CD4-positive, alpha-beta memory T cell (primary cell): ENCODE measurements at regions of chr19 and their contacts with region 1.

Region 1: DNA sequence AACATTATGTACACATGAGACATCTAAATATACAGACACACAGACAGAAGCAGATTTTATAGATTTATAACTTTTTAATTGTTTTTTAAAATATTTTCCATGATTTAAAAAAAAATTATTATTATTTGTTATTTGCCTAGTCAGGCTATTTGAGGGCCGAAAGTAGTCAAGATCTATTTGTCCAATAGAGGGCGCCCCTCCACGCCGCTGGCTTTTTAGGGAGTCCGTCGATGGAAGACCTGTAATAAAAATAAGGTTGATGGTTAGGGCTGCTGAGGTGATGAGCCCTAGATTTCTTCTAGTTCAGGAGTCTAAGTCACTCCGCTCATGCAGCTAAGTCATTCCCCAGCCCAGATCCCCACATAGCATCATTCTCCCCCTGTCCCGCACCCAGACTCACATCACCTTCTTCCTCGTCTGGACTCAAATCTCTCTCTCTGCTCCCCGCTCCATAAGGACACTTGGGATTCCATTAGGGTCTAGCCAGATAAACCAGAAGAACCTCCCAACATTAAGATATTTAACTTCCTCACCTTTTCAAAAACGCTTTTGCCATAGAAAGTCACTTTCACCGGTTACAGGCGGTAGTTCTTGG is 33.9 kb upstream of the CEACAM21 start:
- DNase-seq: peak; percentile 69 to 80 (median 76)
- H3K4me3 ChIP-seq: no peak overlapping the region
- H3K4me3 Mint-ChIP-seq: peak overlapping the region in 7 of 8 donors; percentile 55 to 86 (median 66)
- H3K27ac ChIP-seq: no peak overlapping the region
- H3K27ac Mint-ChIP-seq: peak overlapping the region; percentile 65 to 92 (median 86)
- H3K4me1 ChIP-seq: peaks cover 51% of the 10 kb centered on the region
- H3K4me1 Mint-ChIP-seq: peaks cover 42 to 48% (median 45%) of the 10 kb centered on the region in 4 donors
- H3K27me3 ChIP-seq: no peaks in the 10 kb centered on the region
- H3K27me3 Mint-ChIP-seq: no peaks in the 10 kb centered on the region

Region 2: GRCh38 chr19:41521931-41522555 is 20.0 kb before region 1 on chr19:
- CTCF ChIA-PET with region 1: interaction called, 4 read pairs
- POLR2A ChIA-PET with region 1: interaction called, 4 read pairs
- intact Hi-C with region 1: loop called (anchors 2 kb)
- DNase-seq: peak; percentile 40 to 58 (median 43)
- H3K4me3 ChIP-seq: peak overlapping the region in 1 of 2 donors; percentile 50
- H3K4me3 Mint-ChIP-seq: peak overlapping the region; percentile 82 to 96 (median 90)
- H3K27ac ChIP-seq: peak overlapping the region; percentile 46
- H3K27ac Mint-ChIP-seq: peak overlapping the region; percentile 78 to 95 (median 94)
- H3K4me1 ChIP-seq: peaks cover 13% of the 10 kb centered on the region
- H3K4me1 Mint-ChIP-seq: peaks cover 15 to 28% (median 18%) of the 10 kb centered on the region in 4 donors
- H3K27me3 ChIP-seq: peaks cover 3% of the 10 kb centered on the region
- H3K27me3 Mint-ChIP-seq: peaks cover 5 to 28% of the 10 kb centered on the region in 2 donors

Region 3: DNA sequence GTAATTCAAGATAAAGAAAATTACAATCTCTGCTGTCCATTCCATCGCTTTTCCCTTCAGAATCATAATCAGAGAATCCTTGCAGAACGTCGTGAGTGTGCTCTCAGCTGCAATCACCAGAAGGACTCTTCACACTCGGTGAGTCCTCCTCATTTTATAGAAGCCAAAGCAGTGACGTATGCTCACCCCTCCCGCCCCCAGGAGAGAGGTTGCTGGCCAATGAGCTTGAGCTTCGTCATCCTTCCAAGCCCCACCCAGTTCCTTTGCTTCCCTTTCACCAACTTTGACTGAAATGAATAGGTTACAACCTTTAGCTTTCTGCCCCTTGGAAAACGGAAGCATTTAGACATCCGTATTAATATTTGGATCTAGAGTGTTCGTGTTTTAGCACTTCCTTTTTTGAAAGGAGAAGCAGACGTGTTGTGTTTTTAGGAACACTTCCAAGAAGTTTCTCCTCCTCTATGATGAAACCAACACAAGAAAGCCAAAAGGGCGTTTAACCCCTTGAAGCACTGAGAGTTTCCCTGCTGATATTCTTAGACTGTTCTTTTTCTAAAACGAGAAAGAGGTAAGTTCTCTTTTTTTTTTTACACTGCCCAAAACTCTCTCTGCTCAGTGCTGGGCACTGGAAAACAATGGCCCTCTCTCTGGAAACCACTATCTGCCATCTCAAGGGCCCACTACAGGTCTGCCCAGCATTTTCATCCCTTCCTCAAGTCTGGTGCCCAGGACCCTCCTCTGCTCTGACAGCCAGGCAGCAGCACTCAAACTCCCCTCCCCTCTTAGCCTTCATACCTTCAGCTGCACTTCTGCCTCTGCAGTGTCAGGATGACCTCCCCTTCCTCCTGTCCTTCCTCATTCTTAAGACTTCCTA is 10.4 kb before region 1 on chr19:
- CTCF ChIA-PET with region 1: interaction called, 15 read pairs
- POLR2A ChIA-PET with region 1: interaction called, 78 read pairs
- intact Hi-C with region 1: no loop called
- DNase-seq: peak; percentile 80 to 93 (median 88)
- H3K4me3 ChIP-seq: peak overlapping the region; percentile 30 to 37
- H3K4me3 Mint-ChIP-seq: peak overlapping the region; percentile 77 to 88 (median 86)
- H3K27ac ChIP-seq: peak overlapping the region; percentile 53
- H3K27ac Mint-ChIP-seq: peak overlapping the region; percentile 82 to 98 (median 94)
- H3K4me1 ChIP-seq: peaks cover 53% of the 10 kb centered on the region
- H3K4me1 Mint-ChIP-seq: peaks cover 33 to 60% (median 49%) of the 10 kb centered on the region in 4 donors
- H3K27me3 ChIP-seq: no peaks in the 10 kb centered on the region
- H3K27me3 Mint-ChIP-seq: peaks cover 1 to 3% of the 10 kb centered on the region in 2 donors

Region 4: GRCh38 chr19:41554907-41555306 is 12.8 kb after region 1 on chr19:
- CTCF ChIA-PET with region 1: interaction called, 561 read pairs
- POLR2A ChIA-PET with region 1: interaction called, 547 read pairs
- intact Hi-C with region 1: loop called (anchors 1 kb)
- DNase-seq: peak; percentile 64 to 78 (median 66)
- H3K4me3 ChIP-seq: peak overlapping the region in 1 of 2 donors; percentile 37
- H3K4me3 Mint-ChIP-seq: peak overlapping the region; percentile 56 to 100 (median 98)
- H3K27ac ChIP-seq: peak overlapping the region; percentile 63
- H3K27ac Mint-ChIP-seq: peak overlapping the region; percentile 66 to 95 (median 88)
- H3K4me1 ChIP-seq: peaks cover 72% of the 10 kb centered on the region
- H3K4me1 Mint-ChIP-seq: peaks cover 45 to 84% (median 62%) of the 10 kb centered on the region in 4 donors
- H3K27me3 ChIP-seq: no peaks in the 10 kb centered on the region
- H3K27me3 Mint-ChIP-seq: no peaks in the 10 kb centered on the region

Region 5: DNA sequence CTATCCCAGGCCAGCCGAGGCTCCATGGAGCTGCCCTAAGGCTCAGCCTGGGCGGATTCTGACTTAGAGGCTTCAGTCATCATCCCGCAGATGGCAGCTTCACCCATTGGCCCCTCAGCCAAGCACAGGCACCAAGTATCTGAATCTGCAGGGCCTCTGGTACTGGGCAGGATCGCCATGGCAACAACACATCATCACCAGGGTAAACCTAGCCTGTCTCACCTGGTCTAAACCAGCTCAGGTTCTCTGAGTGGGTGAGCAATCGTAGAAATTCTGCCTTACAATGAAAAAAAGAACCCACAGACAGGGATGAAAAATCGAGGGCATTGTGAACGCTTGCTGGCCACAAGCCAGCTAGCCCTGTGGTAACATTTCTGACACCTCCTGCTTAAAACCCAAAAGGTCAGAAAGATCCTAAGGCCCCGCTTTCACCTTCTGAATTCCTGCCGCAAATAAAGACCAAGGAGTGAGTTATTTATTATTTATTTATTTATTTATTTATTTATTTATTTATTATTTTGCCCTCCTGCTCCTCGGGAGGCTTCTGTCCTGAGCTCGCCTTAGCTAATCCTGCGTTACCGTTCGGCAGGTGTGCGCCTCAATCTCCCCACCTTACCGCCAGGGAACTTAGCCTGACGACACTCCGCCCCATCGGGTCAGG is 21.9 kb after region 1 on chr19:
- CTCF ChIA-PET with region 1: interaction called, 561 read pairs
- POLR2A ChIA-PET with region 1: interaction called, 547 read pairs
- intact Hi-C with region 1: loop called (anchors 1 kb)
- DNase-seq: peak in 4 of 5 donors; percentile 58 to 88 (median 66)
- H3K4me3 ChIP-seq: peak overlapping the region in 1 of 2 donors; percentile 36
- H3K4me3 Mint-ChIP-seq: peak overlapping the region; percentile 31 to 85 (median 70)
- H3K27ac ChIP-seq: peak overlapping the region; percentile 28
- H3K27ac Mint-ChIP-seq: peak overlapping the region in 6 of 7 donors; percentile 82 to 94 (median 88)
- H3K4me1 ChIP-seq: peaks cover 75% of the 10 kb centered on the region
- H3K4me1 Mint-ChIP-seq: peaks cover 54 to 91% (median 70%) of the 10 kb centered on the region in 4 donors
- H3K27me3 ChIP-seq: no peaks in the 10 kb centered on the region
- H3K27me3 Mint-ChIP-seq: no peaks in the 10 kb centered on the region

Region 6: GRCh38 chr19:41570639-41571112 is 28.6 kb after region 1 on chr19:
- CTCF ChIA-PET with region 1: interaction called, 561 read pairs
- POLR2A ChIA-PET with region 1: interaction called, 547 read pairs
- intact Hi-C with region 1: loop called (anchors 1 kb)
- DNase-seq: peak; percentile 80 to 83 (median 82)
- H3K4me3 ChIP-seq: no peak overlapping the region
- H3K4me3 Mint-ChIP-seq: peak overlapping the region in 5 of 8 donors; percentile 35 to 74 (median 47)
- H3K27ac ChIP-seq: no peak overlapping the region
- H3K27ac Mint-ChIP-seq: peak overlapping the region; percentile 5 to 87 (median 65)
- H3K4me1 ChIP-seq: peaks cover 43% of the 10 kb centered on the region
- H3K4me1 Mint-ChIP-seq: peaks cover 22 to 59% (median 44%) of the 10 kb centered on the region in 4 donors
- H3K27me3 ChIP-seq: no peaks in the 10 kb centered on the region
- H3K27me3 Mint-ChIP-seq: no peaks in the 10 kb centered on the region

Region 7: GRCh38 chr19:41597600-41598041 is 55.5 kb after region 1 on chr19:
- CTCF ChIA-PET with region 1: interaction called, 5 read pairs
- POLR2A ChIA-PET with region 1: interaction called, 3 read pairs
- intact Hi-C with region 1: loop called (anchors 1 kb)
- DNase-seq: peak; percentile 69 to 77 (median 74)
- H3K4me3 ChIP-seq: no peak overlapping the region
- H3K4me3 Mint-ChIP-seq: peak overlapping the region in 2 of 8 donors; percentile 49 to 76
- H3K27ac ChIP-seq: no peak overlapping the region
- H3K27ac Mint-ChIP-seq: peak overlapping the region in 2 of 7 donors; percentile 59 to 63
- H3K4me1 ChIP-seq: peaks cover 9% of the 10 kb centered on the region
- H3K4me1 Mint-ChIP-seq: peaks cover 7 to 11% (median 11%) of the 10 kb centered on the region in 4 donors
- H3K27me3 ChIP-seq: peaks cover 8% of the 10 kb centered on the region
- H3K27me3 Mint-ChIP-seq: peaks cover 10 to 11% of the 10 kb centered on the region in 2 donors

Region 8: DNA sequence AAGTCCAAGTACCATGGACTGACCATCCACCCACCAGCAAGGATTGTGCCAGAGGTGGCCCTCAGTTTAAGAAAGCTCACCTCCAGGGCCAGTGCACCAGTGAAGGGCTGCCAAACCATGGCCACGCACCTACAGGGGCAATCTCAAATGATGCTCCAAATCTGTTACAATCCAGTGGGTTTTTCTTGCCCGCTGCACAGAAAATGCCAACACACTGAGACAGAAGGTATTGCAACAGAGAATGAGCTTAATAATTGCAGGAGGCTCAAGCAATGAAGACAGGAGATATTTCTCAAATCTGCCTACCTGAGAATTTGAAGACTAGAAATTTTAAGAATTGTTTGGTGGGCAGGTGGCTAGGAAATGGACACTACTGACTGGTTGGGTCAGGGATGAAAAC is 124.0 kb after region 1 on chr19:
- CTCF ChIA-PET with region 1: no interaction called
- POLR2A ChIA-PET with region 1: no interaction called
- intact Hi-C with region 1: no loop called
- DNase-seq: no peak
- H3K4me3 ChIP-seq: no peak overlapping the region
- H3K4me3 Mint-ChIP-seq: no peak overlapping the region
- H3K27ac ChIP-seq: no peak overlapping the region
- H3K27ac Mint-ChIP-seq: no peak overlapping the region
- H3K4me1 ChIP-seq: no peaks in the 10 kb centered on the region
- H3K4me1 Mint-ChIP-seq: no peaks in the 10 kb centered on the region
- H3K27me3 ChIP-seq: no peaks in the 10 kb centered on the region
- H3K27me3 Mint-ChIP-seq: peaks cover 21 to 27% of the 10 kb centered on the region in 2 donors